PC-3 (cell line): ENCODE measurements at regions of chr17 and their contacts with region 1.

Region 1: DNA sequence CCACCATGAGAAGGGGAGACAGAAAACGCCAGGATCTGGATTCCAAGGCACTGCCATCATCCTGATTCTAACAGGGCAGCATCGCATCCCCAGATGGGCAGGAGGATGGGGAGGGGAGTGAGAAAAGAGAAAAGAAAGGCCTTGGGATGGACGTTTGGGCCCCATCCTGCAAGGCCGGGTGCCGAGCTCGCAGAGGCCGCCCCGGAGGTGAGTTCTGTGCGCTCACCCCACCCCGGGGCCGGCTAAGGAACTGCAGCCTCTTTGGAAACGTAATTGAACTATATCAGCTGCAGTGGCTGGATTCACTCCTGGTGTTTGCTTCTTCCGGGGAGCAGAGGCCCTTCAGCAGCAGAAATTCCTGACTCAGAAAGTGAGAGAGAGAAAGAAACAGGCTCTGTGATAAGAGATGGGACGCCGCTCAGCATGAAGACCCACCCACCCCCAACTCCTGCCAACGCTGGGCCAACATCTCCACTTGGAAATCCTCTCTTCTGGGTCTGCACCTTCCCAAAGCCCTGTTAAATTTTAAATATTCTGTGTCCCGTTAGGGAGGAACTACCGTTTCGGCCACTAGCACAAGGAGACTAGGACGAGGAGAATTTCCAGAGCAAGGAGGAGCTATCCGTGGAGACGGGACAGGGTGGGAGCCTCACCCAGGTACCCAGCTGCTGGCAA is 8.5 kb upstream of the SSTR2 start:
- DNase-seq: peak; percentile 77
- ATAC-seq: peak; percentile 95
- H3K4me3 ChIP-seq: no peak overlapping the region
- H3K27ac ChIP-seq: no peak overlapping the region
- H3K4me1 ChIP-seq: peaks cover 3% of the 10 kb centered on the region; the same call in 1 of the 2 replicates
- H3K27me3 ChIP-seq: 0 out of 2 replicates have a peak, but pooled peaks cover 3% of the 10 kb centered on the region
- CTCF ChIP-seq: peak; percentile 92

Region 2: DNA sequence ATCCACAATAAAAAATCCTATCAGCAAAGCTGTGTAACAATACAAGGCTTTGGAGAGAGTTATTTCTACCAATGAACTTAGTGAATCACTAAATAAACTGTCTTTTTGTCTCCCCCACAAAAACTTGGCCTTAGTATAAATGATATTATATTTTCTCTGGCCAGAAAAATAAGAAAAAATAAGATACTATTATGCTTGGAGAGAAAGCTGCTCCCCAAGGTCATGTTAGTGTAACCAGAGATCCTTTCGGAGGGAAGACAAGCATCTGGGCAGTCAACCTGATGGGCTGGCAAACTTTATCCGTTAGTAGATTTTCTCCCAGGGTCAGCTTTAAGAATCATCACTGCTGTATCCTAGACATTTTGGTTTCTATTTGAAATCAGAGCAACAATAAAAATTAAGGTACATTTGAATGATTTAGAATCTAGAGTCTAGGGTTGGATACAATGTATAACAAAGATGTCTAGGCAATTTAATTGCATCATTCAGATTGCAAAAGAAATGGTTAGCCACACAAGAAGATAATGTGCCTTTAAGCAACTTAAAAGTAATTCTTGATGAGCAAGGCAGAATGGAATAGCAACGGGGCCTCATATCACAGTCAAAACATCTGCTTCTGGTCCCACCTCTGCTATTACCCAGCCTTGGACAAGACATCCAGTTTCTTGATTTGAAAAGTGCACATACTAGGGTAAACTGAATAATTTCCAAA is 344.2 kb before region 1 on chr17:
- CTCF ChIA-PET with region 1: interaction called, 12 read pairs
- POLR2A ChIA-PET with region 1: no interaction called
- intact Hi-C with region 1: no loop called
- DNase-seq: no peak
- ATAC-seq: no peak
- H3K4me3 ChIP-seq: no peak overlapping the region
- H3K27ac ChIP-seq: no peak overlapping the region
- H3K4me1 ChIP-seq: peaks cover 5% of the 10 kb centered on the region; the same call in 1 of the 2 replicates
- H3K27me3 ChIP-seq: no peaks in the 10 kb centered on the region
- CTCF ChIP-seq: no peak

Region 3: GRCh38 chr17:72985881-72986720 is 170.2 kb before region 1 on chr17:
- CTCF ChIA-PET with region 1: interaction called, 19 read pairs
- POLR2A ChIA-PET with region 1: no interaction called
- intact Hi-C with region 1: loop called (anchors 1 kb)
- DNase-seq: peak; percentile 88
- ATAC-seq: peak; percentile 57
- H3K4me3 ChIP-seq: no peak overlapping the region
- H3K27ac ChIP-seq: no peak overlapping the region
- H3K4me1 ChIP-seq: peaks cover 25% of the 10 kb centered on the region
- H3K27me3 ChIP-seq: no peaks in the 10 kb centered on the region
- CTCF ChIP-seq: peak; percentile 98

Region 4: GRCh38 chr17:73007407-73007806 is 148.9 kb before region 1 on chr17:
- CTCF ChIA-PET with region 1: interaction called, 3 read pairs
- POLR2A ChIA-PET with region 1: no interaction called
- intact Hi-C with region 1: loop called (anchors 1 kb)
- DNase-seq: no peak
- ATAC-seq: no peak
- H3K4me3 ChIP-seq: no peak overlapping the region
- H3K27ac ChIP-seq: no peak overlapping the region
- H3K4me1 ChIP-seq: peaks cover 7% of the 10 kb centered on the region
- H3K27me3 ChIP-seq: no peaks in the 10 kb centered on the region
- CTCF ChIP-seq: no peak

Region 5: GRCh38 chr17:73132085-73132492 is 24.2 kb before region 1 on chr17:
- CTCF ChIA-PET with region 1: no interaction called
- POLR2A ChIA-PET with region 1: no interaction called
- intact Hi-C with region 1: no loop called
- DNase-seq: no peak
- ATAC-seq: no peak
- H3K4me3 ChIP-seq: no peak overlapping the region
- H3K27ac ChIP-seq: no peak overlapping the region
- H3K4me1 ChIP-seq: no peaks in the 10 kb centered on the region
- H3K27me3 ChIP-seq: no peaks in the 10 kb centered on the region
- CTCF ChIP-seq: no peak

Region 6: GRCh38 chr17:73166731-73167581 is 10.7 kb after region 1 on chr17:
- CTCF ChIA-PET with region 1: no interaction called
- POLR2A ChIA-PET with region 1: interaction called, 22 read pairs
- intact Hi-C with region 1: no loop called
- DNase-seq: no peak
- ATAC-seq: no peak
- H3K4me3 ChIP-seq: no peak overlapping the region
- H3K27ac ChIP-seq: no peak overlapping the region
- H3K4me1 ChIP-seq: 0 out of 2 replicates have a peak, but pooled peaks cover 9% of the 10 kb centered on the region
- H3K27me3 ChIP-seq: peaks cover 54% of the 10 kb centered on the region
- CTCF ChIP-seq: no peak

Region 7: GRCh38 chr17:73956669-73957465 is 800.6 kb after region 1 on chr17:
- CTCF ChIA-PET with region 1: no interaction called
- POLR2A ChIA-PET with region 1: no interaction called
- intact Hi-C with region 1: no loop called
- DNase-seq: peak; percentile 66
- ATAC-seq: peak; percentile 35; the same call in 1 of the 2 replicates
- H3K4me3 ChIP-seq: no peak overlapping the region
- H3K27ac ChIP-seq: no peak overlapping the region
- H3K4me1 ChIP-seq: no peaks in the 10 kb centered on the region
- H3K27me3 ChIP-seq: peaks cover 26% of the 10 kb centered on the region
- CTCF ChIP-seq: peak; percentile 70